ENCODE measurements at regions of chr1 and their contacts with region 1.

Region 1: GRCh38 chr1:113871597-113872113 is at the start of gene PTPN22:
- DNase-seq: peak; percentile 89
- H3K4me3 Mint-ChIP-seq: peak within 1 kb of the TSS; percentile 80
- H3K27ac Mint-ChIP-seq: peak within 1 kb of the TSS; percentile 97
- H3K4me1 Mint-ChIP-seq: peaks cover 75% of the 10 kb centered on the region
- H3K27me3 Mint-ChIP-seq: no peaks in the 10 kb centered on the region
- total RNA-seq, gene PTPN22: 45.2 to 45.7 TPM

Region 2: DNA sequence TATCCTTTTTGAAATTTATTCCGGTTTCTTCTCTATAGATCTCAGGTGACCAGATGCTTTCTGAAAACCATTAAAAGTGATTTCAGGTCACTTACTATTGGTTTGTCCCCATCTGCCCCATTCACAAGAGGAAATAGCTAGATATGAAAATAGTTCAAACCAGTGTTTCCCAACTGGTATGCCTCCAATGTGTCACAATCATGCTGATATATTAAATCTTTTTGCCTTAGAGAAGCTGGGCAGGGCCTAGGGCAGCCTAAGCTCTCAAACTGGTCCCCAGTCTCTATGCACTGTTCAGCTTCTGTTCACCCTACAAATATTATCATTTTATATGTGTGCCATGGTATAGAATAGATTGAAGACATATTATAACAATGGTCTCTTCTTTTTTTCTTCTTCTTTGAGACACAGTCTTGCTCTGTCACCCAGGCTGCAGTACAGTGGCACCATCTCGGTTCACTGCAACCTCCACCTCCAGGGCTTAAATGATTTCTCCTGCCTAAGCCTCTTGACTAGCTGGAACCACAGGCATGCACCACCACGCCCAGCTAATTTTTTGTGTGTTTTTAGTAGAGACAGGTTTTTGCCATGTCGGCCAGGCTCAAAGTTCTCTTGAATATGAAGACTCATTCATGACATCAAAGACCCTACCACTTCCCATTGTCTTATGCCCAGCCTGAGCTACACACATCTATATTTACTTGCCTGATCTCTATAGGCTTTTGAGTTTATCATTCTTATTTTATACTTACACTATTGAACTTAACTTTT is 15.8 kb before region 1 on chr1:
- CTCF ChIA-PET with region 1: interaction called, 4 read pairs
- POLR2A ChIA-PET with region 1: interaction called, 9 read pairs
- intact Hi-C with region 1: loop called (anchors 2 kb)
- DNase-seq: no peak
- H3K4me3 Mint-ChIP-seq: no peak overlapping the region
- H3K27ac Mint-ChIP-seq: no peak overlapping the region
- H3K4me1 Mint-ChIP-seq: peaks cover 31% of the 10 kb centered on the region
- H3K27me3 Mint-ChIP-seq: no peaks in the 10 kb centered on the region

Region 3: DNA sequence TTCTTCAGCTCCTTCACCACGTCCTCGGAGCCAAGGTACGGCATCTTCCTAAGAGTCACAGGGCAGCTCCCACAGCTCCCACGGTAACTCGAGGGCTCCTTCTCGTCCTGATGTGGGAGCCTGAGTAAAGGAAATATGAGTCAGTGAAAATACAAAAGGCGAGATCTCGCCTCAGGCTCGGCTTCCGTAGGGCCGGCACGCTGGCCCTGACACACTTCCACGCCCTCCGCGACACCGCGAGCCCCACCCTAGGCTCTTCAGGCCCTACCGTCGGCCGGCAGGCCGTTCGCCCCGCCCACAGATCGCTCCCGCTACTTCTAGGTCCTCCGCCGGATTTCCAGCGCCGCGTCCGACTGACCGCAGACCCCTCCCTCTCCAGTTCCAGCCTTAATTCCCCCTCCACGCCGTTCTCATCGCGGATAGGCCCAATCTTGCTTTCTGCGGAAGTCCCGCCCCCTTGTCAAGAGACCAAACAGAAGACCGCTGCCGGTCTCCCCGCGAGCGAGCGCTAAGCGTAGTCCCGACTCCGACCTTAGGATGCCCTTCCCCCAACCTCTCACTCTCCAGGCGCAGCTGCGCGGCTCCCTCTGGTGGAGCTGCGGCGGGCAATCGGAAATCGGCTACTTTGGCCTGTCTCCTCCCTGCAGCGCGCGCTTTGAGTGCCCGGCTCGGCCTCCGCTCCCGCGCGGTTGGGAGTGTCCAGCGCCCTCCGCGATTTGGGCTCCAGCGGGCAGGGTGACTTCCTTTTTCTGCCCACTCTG is 33.2 kb after region 1 on chr1 and contains the starts of genes AP4B1 and DCLRE1B:
- CTCF ChIA-PET with region 1: interaction called, 31 read pairs
- POLR2A ChIA-PET with region 1: interaction called, 22 read pairs
- intact Hi-C with region 1: loop called (anchors 1 kb)
- DNase-seq: peak; percentile 99
- H3K4me3 Mint-ChIP-seq: peak within 1 kb of the TSS; percentile 94
- H3K27ac Mint-ChIP-seq: peak within 1 kb of the TSS; percentile 96
- H3K4me1 Mint-ChIP-seq: peaks cover 39% of the 10 kb centered on the region
- H3K27me3 Mint-ChIP-seq: no peaks in the 10 kb centered on the region
- total RNA-seq, gene AP4B1: 41.4 to 42.2 TPM
- total RNA-seq, gene DCLRE1B: 19.4 to 19.6 TPM